Activated CD4-positive, alpha-beta T cell treated with anti-CD3 and anti-CD28 coated beads, Interleukin-2, amount 10 ng/mL, durations not matched to agents 24 days and 14 days (primary cell): ENCODE measurements at regions of chr5 and their contacts with region 1.

Region 1: GRCh38 chr5:10595678-10596309 is 31.9 kb downstream of the ANKRD33B start:
- DNase-seq: peak; percentile 83
- H3K4me3 Mint-ChIP-seq: peak overlapping the region; percentile 44
- H3K27ac Mint-ChIP-seq: peak overlapping the region; percentile 80
- H3K4me1 Mint-ChIP-seq: peaks cover 61% of the 10 kb centered on the region
- H3K27me3 Mint-ChIP-seq: no peaks in the 10 kb centered on the region

Region 2: DNA sequence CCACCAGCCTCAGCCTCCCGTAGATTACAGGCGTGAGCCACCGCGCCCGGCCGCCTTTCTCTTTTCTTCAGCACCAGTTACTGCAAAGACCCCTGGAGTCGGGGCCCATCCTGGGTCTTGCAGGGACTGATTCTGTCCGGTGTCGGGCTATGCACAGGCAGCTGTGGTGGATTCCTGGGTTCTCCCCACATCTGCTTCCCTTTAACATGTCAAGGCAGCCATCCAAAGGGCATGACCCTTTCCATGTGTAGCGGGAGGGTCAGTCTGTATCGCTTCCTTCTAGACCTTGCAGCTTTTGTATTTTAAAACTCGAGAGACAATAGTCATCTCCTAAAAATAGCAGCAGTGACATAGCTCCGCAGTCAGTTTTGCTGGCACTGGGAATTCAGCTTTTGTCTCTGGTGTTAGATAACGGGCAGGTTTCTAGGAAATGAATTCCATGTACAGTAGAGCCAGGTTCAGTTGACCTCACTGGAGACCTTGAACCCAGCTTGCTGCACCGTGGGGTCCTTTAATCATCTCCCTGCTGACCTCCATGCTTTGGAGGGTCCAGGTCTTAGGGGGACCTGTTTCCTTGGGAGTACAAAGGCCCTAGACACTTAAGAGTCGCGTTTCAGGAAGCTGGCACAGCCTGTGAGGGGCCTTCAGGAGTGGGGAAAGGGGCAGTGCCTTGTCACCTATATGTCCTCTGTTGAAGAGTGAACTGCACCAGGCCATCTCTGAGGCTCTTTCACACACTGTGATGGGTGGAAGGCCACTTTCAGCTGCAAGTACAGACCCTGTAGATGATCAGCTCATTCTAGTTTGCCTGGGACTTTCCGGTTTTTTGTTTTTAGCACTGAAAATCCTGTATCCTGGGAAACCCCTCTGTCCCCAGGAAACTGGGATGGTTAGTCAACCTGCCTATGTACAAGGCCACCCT is 18.2 kb before region 1 on chr5:
- intact Hi-C with region 1: loop called (anchors 1 kb)
- DNase-seq: no peak
- H3K4me3 Mint-ChIP-seq: peak overlapping the region; percentile 3
- H3K27ac Mint-ChIP-seq: peak overlapping the region; percentile 7
- H3K4me1 Mint-ChIP-seq: peaks cover 42% of the 10 kb centered on the region
- H3K27me3 Mint-ChIP-seq: no peaks in the 10 kb centered on the region

Region 3: GRCh38 chr5:10628601-10629000 is 32.8 kb after region 1 on chr5:
- intact Hi-C with region 1: loop called (anchors 1 kb)
- DNase-seq: no peak
- H3K4me3 Mint-ChIP-seq: no peak overlapping the region
- H3K27ac Mint-ChIP-seq: peak overlapping the region; percentile 34
- H3K4me1 Mint-ChIP-seq: peaks cover 63% of the 10 kb centered on the region
- H3K27me3 Mint-ChIP-seq: no peaks in the 10 kb centered on the region

Region 4: DNA sequence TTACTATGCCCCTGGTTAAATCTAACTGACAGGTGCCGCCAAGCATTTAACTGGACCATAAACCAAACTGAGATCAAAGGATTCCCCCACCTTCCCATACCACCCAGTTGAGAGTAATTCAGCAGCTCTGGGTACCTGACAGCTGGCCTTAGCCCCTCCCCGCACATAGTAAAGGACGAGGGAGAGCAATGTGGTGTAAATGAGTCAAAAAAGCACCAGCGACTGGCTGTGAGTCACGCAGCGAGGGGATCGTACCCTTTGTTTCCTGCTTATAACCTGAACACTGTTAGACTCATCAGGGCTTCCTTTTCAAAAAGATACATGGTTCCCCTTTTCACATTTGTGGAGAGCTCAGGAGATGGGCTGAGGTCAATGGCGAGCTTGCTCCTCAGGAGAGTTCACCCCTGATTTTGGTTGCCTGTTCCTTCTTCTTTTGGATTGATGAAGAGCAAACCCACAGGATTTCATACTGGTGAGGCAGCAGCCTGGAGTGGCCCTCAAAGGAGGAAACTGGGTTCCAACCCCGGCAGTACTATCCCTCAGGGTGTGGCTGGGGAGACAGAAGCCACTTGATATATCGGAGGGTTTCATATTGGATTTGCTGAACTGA is 39.6 kb after region 1 on chr5:
- intact Hi-C with region 1: loop called (anchors 1 kb)
- DNase-seq: peak; percentile 89
- H3K4me3 Mint-ChIP-seq: peak overlapping the region; percentile 81
- H3K27ac Mint-ChIP-seq: peak overlapping the region; percentile 98
- H3K4me1 Mint-ChIP-seq: peaks cover 71% of the 10 kb centered on the region
- H3K27me3 Mint-ChIP-seq: no peaks in the 10 kb centered on the region